ENCODE measurements at regions of chr3 and their contacts with region 1.

Region 1: GRCh38 chr3:56915966-56916586 is 114.3 kb upstream of the ARHGEF3 start:
- DNase-seq: peak; percentile 70
- ATAC-seq: peak; percentile 69
- H3K4me3 ChIP-seq: peak overlapping the region; percentile 25 to 79 (median 57)
- H3K4me3 Mint-ChIP-seq: peak overlapping the region; percentile 85
- H3K27ac ChIP-seq: peak overlapping the region; percentile 69 to 85
- H3K27ac Mint-ChIP-seq: peak overlapping the region; percentile 70
- H3K4me1 ChIP-seq: peaks cover 43 to 44% of the 10 kb centered on the region in 2 donors
- H3K4me1 Mint-ChIP-seq: peaks cover 58% of the 10 kb centered on the region
- H3K27me3 ChIP-seq: no peaks in the 10 kb centered on the region
- H3K27me3 Mint-ChIP-seq: no peaks in the 10 kb centered on the region
- CTCF ChIP-seq: no peak

Region 2: DNA sequence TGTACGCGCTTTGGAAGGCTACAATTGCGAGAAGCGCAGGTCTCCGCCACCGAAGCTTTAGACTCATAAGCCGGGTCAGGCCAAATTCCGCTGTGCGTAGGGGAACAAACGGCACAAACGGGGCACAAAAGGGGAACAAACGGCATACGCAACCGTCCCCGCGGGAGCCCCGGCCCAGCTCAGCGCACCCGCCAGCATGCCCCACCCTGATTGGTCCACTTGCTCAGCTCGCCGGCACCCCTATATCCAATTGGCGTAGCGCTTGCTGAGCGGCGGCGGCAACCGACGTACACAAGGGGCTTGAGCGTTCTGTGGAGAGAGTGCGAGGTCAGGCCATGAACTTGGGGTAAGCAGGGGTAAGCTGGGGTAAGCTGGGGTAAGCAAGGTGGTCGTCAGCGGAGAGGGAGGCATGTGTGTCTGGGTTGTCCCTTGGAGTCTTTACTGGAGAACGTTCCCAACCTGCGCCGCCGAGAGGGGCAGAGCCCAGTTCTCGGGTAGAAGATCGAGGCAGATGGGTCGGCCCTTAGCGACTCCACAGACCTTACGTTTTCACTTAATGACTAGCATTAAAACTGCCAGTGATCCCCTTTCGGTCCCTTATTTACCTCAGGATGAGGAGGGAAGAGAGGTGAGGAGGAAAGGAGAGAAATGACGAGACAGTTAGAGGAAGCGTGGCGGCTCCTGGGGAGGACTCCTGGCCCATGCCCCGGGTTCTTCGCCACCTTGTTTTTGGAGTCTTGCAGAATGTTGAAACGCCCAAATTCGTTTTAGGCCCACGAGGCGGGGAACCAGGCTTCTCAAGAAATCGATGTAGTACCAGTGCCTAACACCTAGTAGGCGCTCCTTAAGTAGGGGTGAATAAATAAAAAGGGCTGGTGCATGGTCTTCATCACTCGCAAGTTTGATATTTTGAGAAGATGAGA is 358.9 kb before region 1 on chr3 and contains the start of gene CCDC66:
- CTCF ChIA-PET with region 1: no interaction called
- POLR2A ChIA-PET with region 1: no interaction called
- intact Hi-C with region 1: loop called (anchors 10 kb)
- DNase-seq: peak; percentile 94
- ATAC-seq: peak; percentile 98
- H3K4me3 ChIP-seq: peak within 1 kb of the TSS; percentile 83 to 97 (median 91)
- H3K4me3 Mint-ChIP-seq: peak within 1 kb of the TSS; percentile 99
- H3K27ac ChIP-seq: peak within 1 kb of the TSS; percentile 87 to 91
- H3K27ac Mint-ChIP-seq: peak within 1 kb of the TSS; percentile 97
- H3K4me1 ChIP-seq: peaks cover 7 to 8% of the 10 kb centered on the region in 2 donors
- H3K4me1 Mint-ChIP-seq: peaks cover 19% of the 10 kb centered on the region
- H3K27me3 ChIP-seq: no peaks in the 10 kb centered on the region
- H3K27me3 Mint-ChIP-seq: no peaks in the 10 kb centered on the region
- CTCF ChIP-seq: peak; percentile 81
- total RNA-seq, gene CCDC66: 51.7 and 53.7 TPM in 2 replicates

Region 3: GRCh38 chr3:56682462-56683121 is 233.5 kb before region 1 on chr3:
- CTCF ChIA-PET with region 1: no interaction called
- POLR2A ChIA-PET with region 1: interaction called, 3 read pairs
- intact Hi-C with region 1: loop called (anchors 2 kb)
- DNase-seq: peak; percentile 91
- ATAC-seq: peak; percentile 69
- H3K4me3 ChIP-seq: peak overlapping the region; percentile 74 to 99 (median 85)
- H3K4me3 Mint-ChIP-seq: peak overlapping the region; percentile 99
- H3K27ac ChIP-seq: peak overlapping the region; percentile 98 to 99
- H3K27ac Mint-ChIP-seq: peak overlapping the region; percentile 99
- H3K4me1 ChIP-seq: peaks cover 16 to 24% of the 10 kb centered on the region in 2 donors
- H3K4me1 Mint-ChIP-seq: peaks cover 42% of the 10 kb centered on the region
- H3K27me3 ChIP-seq: no peaks in the 10 kb centered on the region
- H3K27me3 Mint-ChIP-seq: no peaks in the 10 kb centered on the region
- CTCF ChIP-seq: no peak

Region 4: DNA sequence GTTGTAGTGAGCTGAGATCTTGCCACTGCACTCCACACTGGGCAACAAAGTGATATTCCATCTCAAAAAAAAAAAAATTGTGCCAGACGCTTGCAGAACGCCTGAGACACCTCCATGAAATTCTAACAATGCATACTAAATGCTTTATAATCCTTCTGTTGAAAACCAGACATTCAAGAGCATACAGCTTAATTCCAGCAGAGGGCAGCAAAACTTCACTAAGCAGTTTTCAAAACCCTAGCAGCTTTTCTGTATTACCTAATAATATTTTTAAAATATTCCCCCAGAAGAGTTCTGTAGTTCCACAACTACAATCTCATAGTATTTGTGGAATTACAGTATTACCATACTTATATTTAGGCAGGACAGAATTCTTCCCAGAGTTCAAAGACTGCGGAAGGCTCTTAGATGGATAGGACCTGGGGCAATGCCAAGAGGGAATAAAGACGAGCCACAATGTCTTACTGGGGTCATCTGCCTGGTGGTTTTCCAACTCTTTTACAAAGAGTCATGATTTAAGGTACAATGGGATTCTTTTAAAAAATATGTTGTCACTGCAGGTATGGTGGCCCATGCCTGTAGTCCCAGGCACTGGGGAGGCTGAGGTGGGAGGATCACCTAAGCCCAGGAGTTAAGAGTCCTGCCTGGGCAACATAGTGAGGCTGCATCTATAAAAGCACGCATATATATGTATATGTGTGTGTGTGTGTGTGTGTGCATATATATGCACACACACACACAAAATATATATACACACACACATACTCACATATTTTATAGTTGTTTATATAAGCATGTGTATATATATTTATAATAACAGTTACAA is 213.4 kb before region 1 on chr3:
- CTCF ChIA-PET with region 1: interaction called, 4 read pairs
- POLR2A ChIA-PET with region 1: no interaction called
- intact Hi-C with region 1: loop called (anchors 5 kb)
- DNase-seq: peak; percentile 81
- ATAC-seq: peak; percentile 64
- H3K4me3 ChIP-seq: no peak overlapping the region
- H3K4me3 Mint-ChIP-seq: no peak overlapping the region
- H3K27ac ChIP-seq: no peak overlapping the region
- H3K27ac Mint-ChIP-seq: no peak overlapping the region
- H3K4me1 ChIP-seq: peaks cover 0 to 4% of the 10 kb centered on the region in 2 donors
- H3K4me1 Mint-ChIP-seq: peaks cover 3% of the 10 kb centered on the region
- H3K27me3 ChIP-seq: no peaks in the 10 kb centered on the region
- H3K27me3 Mint-ChIP-seq: no peaks in the 10 kb centered on the region
- CTCF ChIP-seq: peak; percentile 93

Region 5: GRCh38 chr3:56758539-56758981 is 157.5 kb before region 1 on chr3:
- CTCF ChIA-PET with region 1: interaction called, 4 read pairs
- POLR2A ChIA-PET with region 1: no interaction called
- intact Hi-C with region 1: loop called (anchors 2 kb)
- DNase-seq: peak; percentile 35
- ATAC-seq: peak; percentile 64
- H3K4me3 ChIP-seq: peak overlapping the region in 2 of 5 experiments; percentile 5 to 44
- H3K4me3 Mint-ChIP-seq: peak overlapping the region; percentile 72
- H3K27ac ChIP-seq: peak overlapping the region; percentile 67 to 81
- H3K27ac Mint-ChIP-seq: peak overlapping the region; percentile 97
- H3K4me1 ChIP-seq: peaks cover 43 to 57% of the 10 kb centered on the region in 2 donors
- H3K4me1 Mint-ChIP-seq: peaks cover 59% of the 10 kb centered on the region
- H3K27me3 ChIP-seq: no peaks in the 10 kb centered on the region
- H3K27me3 Mint-ChIP-seq: no peaks in the 10 kb centered on the region
- CTCF ChIP-seq: no peak

Region 6: DNA sequence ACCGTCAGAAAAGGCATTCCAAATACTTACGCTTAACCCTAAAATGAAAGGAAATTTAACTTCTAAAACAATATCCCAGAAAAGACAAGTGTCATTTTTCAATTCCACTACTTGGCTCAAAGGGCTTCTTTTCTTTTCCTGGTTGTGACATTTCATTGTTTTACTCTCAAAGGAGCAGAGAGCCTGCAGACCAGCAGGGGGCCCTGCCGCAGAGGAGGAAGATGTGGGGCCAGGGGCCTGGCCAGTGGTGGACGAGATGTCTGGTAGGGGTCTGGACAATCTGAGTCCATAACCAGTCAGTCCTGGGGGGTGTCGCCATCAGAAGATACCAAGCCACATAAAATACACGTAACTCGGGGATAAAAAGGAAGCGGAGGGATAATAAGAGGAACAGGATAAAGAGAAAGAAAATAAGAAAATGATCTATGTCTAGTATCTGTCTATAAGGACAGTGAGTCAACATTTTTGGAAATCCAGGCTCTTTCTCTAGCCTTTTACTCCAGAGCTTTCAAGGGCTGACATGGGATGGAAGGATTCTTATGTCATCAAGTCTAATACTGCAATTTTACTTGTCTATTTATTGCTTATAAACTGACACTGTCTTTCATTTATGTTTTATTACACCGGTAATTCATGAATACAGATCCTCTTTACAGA is 60.1 kb before region 1 on chr3:
- CTCF ChIA-PET with region 1: no interaction called
- POLR2A ChIA-PET with region 1: no interaction called
- intact Hi-C with region 1: no loop called
- DNase-seq: peak; percentile 20
- ATAC-seq: no peak
- H3K4me3 ChIP-seq: no peak overlapping the region
- H3K4me3 Mint-ChIP-seq: no peak overlapping the region
- H3K27ac ChIP-seq: no peak overlapping the region
- H3K27ac Mint-ChIP-seq: no peak overlapping the region
- H3K4me1 ChIP-seq: no peaks in the 10 kb centered on the region
- H3K4me1 Mint-ChIP-seq: peaks cover 3% of the 10 kb centered on the region
- H3K27me3 ChIP-seq: no peaks in the 10 kb centered on the region
- H3K27me3 Mint-ChIP-seq: no peaks in the 10 kb centered on the region
- CTCF ChIP-seq: peak; percentile 55

Region 7: DNA sequence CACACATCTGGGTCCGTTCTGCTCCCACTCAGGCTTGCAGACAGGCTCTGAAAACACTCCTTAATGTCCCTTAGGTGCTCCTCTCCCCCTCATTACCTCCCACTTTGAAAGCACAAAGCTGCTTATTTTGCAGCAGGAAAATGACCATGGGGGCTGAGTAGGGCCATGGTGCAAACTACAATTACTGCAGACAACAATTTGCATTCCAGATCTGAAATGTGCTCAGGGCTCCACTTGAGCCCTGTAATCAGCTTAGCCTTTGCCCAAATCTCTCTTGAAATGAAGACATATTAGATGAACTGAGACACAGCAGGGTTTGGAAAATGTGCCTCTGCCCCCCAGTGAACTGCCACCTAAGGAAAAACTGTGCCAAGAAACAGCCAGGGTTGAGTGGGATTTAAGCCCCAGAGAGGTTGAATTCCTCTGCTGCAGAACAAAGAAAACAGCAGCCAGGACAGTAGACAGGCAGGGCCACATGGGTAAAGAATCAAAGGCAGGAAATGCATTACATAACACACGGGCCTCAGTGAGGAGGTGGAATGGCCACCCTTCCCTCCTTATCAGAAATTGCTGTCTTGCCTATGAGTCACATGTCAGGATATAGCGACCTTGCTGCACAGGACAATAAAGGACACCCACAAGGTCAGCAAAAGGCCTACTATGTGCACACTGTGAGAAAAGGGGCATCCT is 12.4 kb after region 1 on chr3:
- CTCF ChIA-PET with region 1: no interaction called
- POLR2A ChIA-PET with region 1: no interaction called
- intact Hi-C with region 1: no loop called
- DNase-seq: no peak
- ATAC-seq: no peak
- H3K4me3 ChIP-seq: no peak overlapping the region
- H3K4me3 Mint-ChIP-seq: no peak overlapping the region
- H3K27ac ChIP-seq: no peak overlapping the region
- H3K27ac Mint-ChIP-seq: no peak overlapping the region
- H3K4me1 ChIP-seq: peaks cover 11 to 15% of the 10 kb centered on the region in 2 donors
- H3K4me1 Mint-ChIP-seq: peaks cover 15% of the 10 kb centered on the region
- H3K27me3 ChIP-seq: no peaks in the 10 kb centered on the region
- H3K27me3 Mint-ChIP-seq: no peaks in the 10 kb centered on the region
- CTCF ChIP-seq: no peak

Region 8: DNA sequence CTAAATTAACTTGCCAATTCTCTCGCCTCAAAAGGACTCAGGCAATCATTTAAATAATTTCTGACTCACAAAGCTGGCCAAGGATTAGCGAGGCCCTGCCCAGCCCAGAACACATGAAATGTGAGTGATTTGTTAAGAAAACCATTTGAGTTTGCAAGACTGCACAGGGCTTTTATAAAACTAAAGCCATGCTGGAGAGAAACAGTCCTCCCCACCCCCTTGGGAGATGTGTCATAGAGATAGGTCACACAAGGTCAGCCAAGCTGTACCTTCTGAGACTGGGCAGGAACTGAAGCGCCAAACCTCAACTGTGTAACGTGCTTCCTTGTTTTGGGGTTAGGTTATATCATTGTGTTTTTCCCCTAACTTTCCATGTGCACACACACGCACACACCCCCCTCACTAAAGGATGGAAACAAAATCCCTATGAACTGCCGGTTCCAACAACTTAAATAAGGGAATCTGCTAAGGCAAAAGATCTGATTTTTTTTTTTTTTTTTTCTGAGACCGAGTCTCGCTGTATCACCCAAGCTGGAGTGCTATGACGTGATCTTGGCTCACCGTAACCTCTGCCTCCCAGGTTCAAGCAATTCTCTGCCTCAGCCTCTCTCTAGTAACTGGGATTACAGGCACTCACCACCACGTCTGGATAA is 152.5 kb after region 1 on chr3:
- CTCF ChIA-PET with region 1: no interaction called
- POLR2A ChIA-PET with region 1: no interaction called
- intact Hi-C with region 1: loop called (anchors 2 kb)
- DNase-seq: peak; percentile 92
- ATAC-seq: peak; percentile 99
- H3K4me3 ChIP-seq: peak overlapping the region in 1 of 5 experiments; percentile 34
- H3K4me3 Mint-ChIP-seq: peak overlapping the region; percentile 74
- H3K27ac ChIP-seq: peak overlapping the region in 1 of 2 donors; percentile 21
- H3K27ac Mint-ChIP-seq: peak overlapping the region; percentile 80
- H3K4me1 ChIP-seq: peaks cover 18 to 22% of the 10 kb centered on the region in 2 donors
- H3K4me1 Mint-ChIP-seq: peaks cover 21% of the 10 kb centered on the region
- H3K27me3 ChIP-seq: peaks cover 0 to 46% (median 21%) of the 10 kb centered on the region in 4 experiments
- H3K27me3 Mint-ChIP-seq: peaks cover 42% of the 10 kb centered on the region
- CTCF ChIP-seq: no peak

Measured in B cell (primary cell).